ENCODE measurements at regions of chr2 and their contacts with region 1.

Region 1: DNA sequence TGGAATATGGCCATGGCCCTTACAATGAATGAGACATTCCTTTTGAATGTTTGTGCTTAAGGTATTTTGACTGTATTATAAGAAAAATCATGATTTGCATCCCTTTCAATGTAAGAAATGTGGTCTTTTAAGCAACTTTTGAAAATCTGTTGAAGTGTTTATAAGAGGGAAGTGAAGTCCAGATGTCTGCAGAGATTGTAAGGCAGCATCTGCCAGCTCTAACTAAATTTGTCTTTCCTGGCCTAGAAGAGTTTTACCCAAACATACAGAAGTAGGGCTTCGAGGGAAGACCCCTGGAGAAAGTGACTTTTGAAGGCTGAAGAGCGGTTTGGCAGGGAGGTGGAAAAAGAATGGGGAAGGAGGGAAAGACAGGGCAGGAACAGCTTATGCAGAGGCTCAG is 12.2 kb downstream of the EML6 start:
- DNase-seq: no peak
- ATAC-seq: no peak

Region 2: DNA sequence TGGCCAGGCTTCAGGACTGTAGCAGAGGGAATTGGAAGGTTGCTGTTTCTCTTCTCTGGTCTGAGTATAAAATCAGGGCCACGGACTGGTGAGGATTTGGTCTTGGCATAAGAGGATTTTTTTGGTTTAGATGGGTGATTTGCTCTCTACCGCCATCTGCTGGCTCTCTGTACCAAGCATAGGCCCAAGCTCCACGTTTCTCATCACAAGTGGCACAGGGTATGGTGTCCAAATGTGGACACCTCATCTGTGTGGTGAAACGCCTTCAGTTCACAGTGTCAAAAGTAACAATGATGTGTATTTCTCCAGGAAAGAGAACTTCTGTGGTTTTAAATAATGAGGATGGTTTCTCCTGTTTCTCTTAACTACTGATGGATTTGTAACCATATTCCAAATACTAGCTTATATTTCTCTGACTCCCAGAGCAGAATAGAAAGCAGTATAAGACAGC is 103.0 kb after region 1 on chr2:
- intact Hi-C with region 1: loop called (anchors 10 kb)
- DNase-seq: peak; percentile 51
- ATAC-seq: peak; percentile 93

Measured in Right ventricle myocardium superior (tissue), 1 donor.